Dendritic cell treated with granulocyte-macrophage colony-stimulating factor and Interleukin-4, amounts not matched to agents 40 ng/mL and 50 ng/mL, for 4 days (primary cell): ENCODE measurements at regions of chr17 and their contacts with region 1.

Region 1: GRCh38 chr17:42475835-42476234 is 17.2 kb downstream of the ATP6V0A1 start:
- H3K4me3 Mint-ChIP-seq: no peak overlapping the region
- H3K27ac Mint-ChIP-seq: peak overlapping the region; percentile 30
- H3K4me1 Mint-ChIP-seq: peaks cover 34% of the 10 kb centered on the region
- H3K27me3 Mint-ChIP-seq: no peaks in the 10 kb centered on the region

Region 2: DNA sequence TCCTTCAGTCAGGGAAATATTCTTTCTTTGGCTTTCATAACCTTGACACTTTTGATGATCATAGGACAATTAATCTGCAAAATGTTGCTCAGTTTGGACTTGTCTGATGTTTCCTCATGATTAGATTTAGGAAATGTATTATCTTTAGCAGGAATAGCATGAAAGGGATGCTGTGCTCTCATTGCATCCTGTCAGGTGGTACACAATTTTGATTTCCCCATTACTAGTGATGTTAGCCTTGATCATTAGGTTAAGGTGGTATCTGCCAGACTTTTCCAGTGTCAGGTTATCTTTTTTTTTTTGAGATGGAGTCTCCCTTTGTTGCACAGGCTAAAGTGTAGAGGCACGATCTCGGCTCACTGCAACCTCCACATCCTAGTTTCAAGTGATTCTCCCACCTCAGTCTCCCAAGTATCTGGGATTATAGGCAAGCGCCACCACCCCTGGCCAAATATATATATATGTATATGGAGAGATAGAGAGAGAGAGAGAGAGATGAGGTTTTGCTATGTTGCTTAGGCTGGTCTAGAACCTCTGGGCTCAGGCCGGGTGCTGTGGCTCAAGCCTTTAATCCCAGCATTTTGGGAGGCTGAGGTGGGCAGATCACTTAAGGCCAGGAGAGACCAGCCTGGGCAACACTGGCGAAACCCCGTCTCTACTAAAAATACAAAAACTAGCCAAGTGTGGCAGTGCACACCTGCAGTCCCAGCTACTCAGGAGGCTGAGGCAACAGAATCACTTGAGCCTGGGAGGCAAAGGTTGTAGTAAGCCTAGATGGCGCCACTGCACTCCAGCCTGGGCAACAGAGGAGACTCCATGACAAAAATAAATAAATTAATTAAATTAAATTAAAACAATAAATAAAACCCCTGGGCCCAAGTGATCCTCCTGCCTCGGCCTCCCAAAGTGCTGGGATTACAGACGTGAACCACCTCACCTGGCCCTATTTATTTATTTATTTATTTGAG is 37.0 kb before region 1 on chr17:
- intact Hi-C with region 1: loop called (anchors 1 kb)
- H3K4me3 Mint-ChIP-seq: no peak overlapping the region
- H3K27ac Mint-ChIP-seq: no peak overlapping the region
- H3K4me1 Mint-ChIP-seq: peaks cover 34% of the 10 kb centered on the region
- H3K27me3 Mint-ChIP-seq: peaks cover 1% of the 10 kb centered on the region